Activated CD4-positive, alpha-beta T cell treated with anti-CD3 and anti-CD28 coated beads for 36 hours (primary cell): ENCODE measurements at regions of chr4 and their contacts with region 1.

Region 1: GRCh38 chr4:40309250-40309774 is 25.8 kb upstream of the CHRNA9 start:
- DNase-seq: peak; percentile 96
- ATAC-seq: peak; percentile 70
- H3K4me3 Mint-ChIP-seq: peak overlapping the region; percentile 71
- H3K27ac Mint-ChIP-seq: peak overlapping the region; percentile 95
- H3K4me1 Mint-ChIP-seq: peaks cover 86% of the 10 kb centered on the region
- H3K27me3 Mint-ChIP-seq: no peaks in the 10 kb centered on the region

Region 2: DNA sequence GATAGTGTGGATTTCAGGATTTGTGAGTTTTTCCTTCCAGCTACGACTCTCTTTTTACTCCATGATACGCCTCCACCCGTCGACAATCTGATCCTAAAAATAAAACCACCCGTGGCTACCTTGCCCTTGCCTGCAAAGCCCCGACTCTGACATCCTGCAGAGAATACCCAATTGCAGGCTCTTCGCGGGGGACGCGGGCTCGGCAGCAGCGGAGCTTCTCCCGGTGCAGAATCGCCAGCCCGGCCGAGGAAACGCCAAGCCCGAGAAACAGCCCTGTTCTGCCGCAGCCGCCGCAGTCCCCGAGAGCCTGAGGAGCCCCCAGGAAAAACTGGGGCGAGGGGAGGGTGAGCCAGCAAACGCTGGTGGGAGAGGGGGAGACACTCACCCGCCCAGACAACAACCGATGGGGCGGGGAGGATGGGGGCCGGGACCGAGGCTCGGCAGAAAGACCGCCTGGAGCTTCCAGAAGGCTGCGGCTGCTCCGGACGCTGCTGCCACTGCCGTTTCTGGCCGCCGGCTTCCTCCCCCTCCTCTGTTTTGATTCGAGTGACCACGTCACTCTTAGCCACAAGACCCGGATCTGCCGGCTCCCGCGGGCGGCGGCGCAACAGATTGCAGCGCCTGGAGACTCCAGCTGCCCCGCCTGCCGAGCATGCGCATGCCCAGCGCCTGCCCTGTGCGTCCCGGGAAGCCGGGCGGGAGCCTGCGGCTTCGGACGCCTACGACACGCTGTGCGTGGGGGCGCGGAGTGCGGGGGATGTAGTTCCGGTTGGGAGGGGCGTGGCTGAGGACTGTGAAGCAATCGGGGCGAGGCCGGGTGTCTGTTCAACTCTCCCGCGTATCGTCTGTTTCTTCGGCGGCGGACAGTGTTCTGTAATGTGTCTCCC is 670.7 kb before region 1 on chr4 and contains the start of gene SMIM14:
- CTCF ChIA-PET with region 1: no interaction called
- POLR2A ChIA-PET with region 1: no interaction called
- intact Hi-C with region 1: loop called in 1 of 2 experiments (anchors 5 kb)
- DNase-seq: peak; percentile 94
- ATAC-seq: peak; percentile 87
- H3K4me3 Mint-ChIP-seq: peak within 1 kb of the TSS; percentile 83
- H3K27ac Mint-ChIP-seq: peak within 1 kb of the TSS; percentile 86
- H3K4me1 Mint-ChIP-seq: peaks cover 33% of the 10 kb centered on the region
- H3K27me3 Mint-ChIP-seq: no peaks in the 10 kb centered on the region
- total RNA-seq, gene SMIM14: 1.4 to 2.0 TPM

Region 3: DNA sequence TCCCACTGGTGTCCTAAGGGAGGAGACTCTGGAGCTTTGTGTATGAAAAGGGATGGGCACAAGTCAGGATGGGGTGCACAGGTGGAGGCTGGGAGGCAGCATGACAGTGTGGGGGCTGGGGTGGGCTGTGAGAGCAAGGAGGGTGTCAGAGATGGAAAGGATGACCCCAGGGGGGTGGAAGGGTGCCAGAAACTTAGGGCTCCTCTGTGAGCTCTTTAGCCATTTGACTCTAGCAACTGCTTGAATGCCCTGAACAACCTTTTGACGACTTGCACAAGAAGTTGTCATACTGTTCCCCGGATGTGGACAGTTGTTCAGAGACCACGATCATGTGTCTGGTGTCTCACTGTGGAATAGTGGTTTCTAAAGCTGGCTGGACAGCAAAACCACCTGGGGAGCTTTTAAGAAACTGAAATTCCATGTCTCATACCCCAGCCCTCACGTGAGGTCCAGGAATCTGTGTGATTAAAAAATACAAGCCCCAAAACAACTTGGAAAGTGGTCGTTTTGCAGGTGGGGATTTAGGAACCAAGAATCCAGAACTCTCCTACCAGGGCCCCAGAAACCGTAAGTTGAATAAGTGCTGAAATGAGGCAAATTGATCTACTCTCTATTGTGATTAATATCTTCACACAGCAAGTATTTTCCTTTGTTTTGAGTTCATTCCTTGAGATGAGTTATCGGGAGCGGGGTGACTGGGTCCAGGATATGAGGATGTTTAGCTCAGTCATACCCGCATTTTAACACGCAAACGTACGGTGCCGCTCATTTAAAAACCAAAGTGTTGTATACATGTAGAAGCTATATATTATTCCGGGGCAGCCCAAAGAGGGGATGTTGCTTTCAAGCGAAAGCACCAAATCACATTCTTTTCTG is 109.1 kb before region 1 on chr4:
- CTCF ChIA-PET with region 1: interaction called, 68 read pairs
- POLR2A ChIA-PET with region 1: interaction called, 15 read pairs
- intact Hi-C with region 1: loop called (anchors 1 kb)
- DNase-seq: peak; percentile 90
- ATAC-seq: peak; percentile 53
- H3K4me3 Mint-ChIP-seq: peak overlapping the region; percentile 98
- H3K27ac Mint-ChIP-seq: peak overlapping the region; percentile 100
- H3K4me1 Mint-ChIP-seq: peaks cover 40% of the 10 kb centered on the region
- H3K27me3 Mint-ChIP-seq: no peaks in the 10 kb centered on the region

Region 4: GRCh38 chr4:40228497-40229365 is 80.6 kb before region 1 on chr4:
- CTCF ChIA-PET with region 1: interaction called, 20 read pairs
- POLR2A ChIA-PET with region 1: interaction called, 8 read pairs
- intact Hi-C with region 1: loop called (anchors 1 kb)
- DNase-seq: peak; percentile 64
- ATAC-seq: peak; percentile 34
- H3K4me3 Mint-ChIP-seq: peak overlapping the region; percentile 61
- H3K27ac Mint-ChIP-seq: peak overlapping the region; percentile 96
- H3K4me1 Mint-ChIP-seq: peaks cover 93% of the 10 kb centered on the region
- H3K27me3 Mint-ChIP-seq: no peaks in the 10 kb centered on the region

Region 5: GRCh38 chr4:40283968-40284367 is 25.3 kb before region 1 on chr4:
- CTCF ChIA-PET with region 1: interaction called, 14 read pairs
- POLR2A ChIA-PET with region 1: no interaction called
- intact Hi-C with region 1: loop called in 1 of 2 experiments (anchors 1 kb)
- DNase-seq: peak; percentile 89
- ATAC-seq: peak; percentile 94
- H3K4me3 Mint-ChIP-seq: peak overlapping the region; percentile 38
- H3K27ac Mint-ChIP-seq: peak overlapping the region; percentile 96
- H3K4me1 Mint-ChIP-seq: peaks cover 60% of the 10 kb centered on the region
- H3K27me3 Mint-ChIP-seq: no peaks in the 10 kb centered on the region

Region 6: GRCh38 chr4:40401631-40402030 is 92.3 kb after region 1 on chr4:
- CTCF ChIA-PET with region 1: no interaction called
- POLR2A ChIA-PET with region 1: no interaction called
- intact Hi-C with region 1: no loop called
- DNase-seq: no peak
- ATAC-seq: no peak
- H3K4me3 Mint-ChIP-seq: no peak overlapping the region
- H3K27ac Mint-ChIP-seq: no peak overlapping the region
- H3K4me1 Mint-ChIP-seq: no peaks in the 10 kb centered on the region
- H3K27me3 Mint-ChIP-seq: no peaks in the 10 kb centered on the region

Region 7: GRCh38 chr4:40699648-40700047 is 390.3 kb after region 1 on chr4:
- CTCF ChIA-PET with region 1: no interaction called
- POLR2A ChIA-PET with region 1: no interaction called
- intact Hi-C with region 1: loop called in 1 of 2 experiments (anchors 5 kb)
- DNase-seq: peak; percentile 27
- ATAC-seq: peak; percentile 52
- H3K4me3 Mint-ChIP-seq: no peak overlapping the region
- H3K27ac Mint-ChIP-seq: peak overlapping the region; percentile 51
- H3K4me1 Mint-ChIP-seq: peaks cover 39% of the 10 kb centered on the region
- H3K27me3 Mint-ChIP-seq: no peaks in the 10 kb centered on the region